Activated CD4-positive, alpha-beta memory T cell treated with anti-CD3 and anti-CD28 coated beads, Interleukin-2, amount 10 ng/mL, durations not matched to agents 7 days and 5 days (primary cell): ENCODE measurements at regions of chr10 and their contacts with region 1.

Region 1: GRCh38 chr10:100562008-100562711 is 26.4 kb downstream of the HIF1AN start:
- DNase-seq: peak; percentile 84
- H3K4me3 Mint-ChIP-seq: no peak overlapping the region
- H3K27ac Mint-ChIP-seq: no peak overlapping the region
- H3K4me1 Mint-ChIP-seq: peaks cover 20% of the 10 kb centered on the region
- H3K27me3 Mint-ChIP-seq: peaks cover 40% of the 10 kb centered on the region

Region 2: GRCh38 chr10:100535715-100536353 is 26.3 kb before region 1 on chr10 and contains the start of gene HIF1AN:
- CTCF ChIA-PET with region 1: interaction called, 13 read pairs
- POLR2A ChIA-PET with region 1: no interaction called
- DNase-seq: peak; percentile 92
- H3K4me3 Mint-ChIP-seq: no peak within 1 kb of the TSS
- H3K27ac Mint-ChIP-seq: peak within 1 kb of the TSS; percentile 22
- H3K4me1 Mint-ChIP-seq: peaks cover 16% of the 10 kb centered on the region
- H3K27me3 Mint-ChIP-seq: no peaks in the 10 kb centered on the region
- total RNA-seq, gene HIF1AN: 57.7 to 58.8 TPM

Region 3: GRCh38 chr10:100743626-100744135 is 181.5 kb after region 1 on chr10:
- CTCF ChIA-PET with region 1: interaction called, 16 read pairs
- POLR2A ChIA-PET with region 1: interaction called, 6 read pairs
- DNase-seq: peak; percentile 62
- H3K4me3 Mint-ChIP-seq: no peak overlapping the region
- H3K27ac Mint-ChIP-seq: no peak overlapping the region
- H3K4me1 Mint-ChIP-seq: peaks cover 26% of the 10 kb centered on the region
- H3K27me3 Mint-ChIP-seq: peaks cover 85% of the 10 kb centered on the region